CD4-positive, alpha-beta memory T cell (primary cell): ENCODE measurements at regions of chr10 and their contacts with region 1.

Region 1: GRCh38 chr10:101060036-101060950 is 1.5 kb upstream of the KAZALD1 start:
- DNase-seq: peak; percentile 80 to 98 (median 94)
- H3K4me3 ChIP-seq: peak overlapping the region; percentile 99 to 100
- H3K4me3 Mint-ChIP-seq: peak overlapping the region; percentile 92 to 98 (median 95)
- H3K27ac ChIP-seq: peak overlapping the region; percentile 92
- H3K27ac Mint-ChIP-seq: peak overlapping the region; percentile 88 to 99 (median 98)
- H3K4me1 ChIP-seq: peaks cover 28% of the 10 kb centered on the region
- H3K4me1 Mint-ChIP-seq: peaks cover 14 to 35% (median 22%) of the 10 kb centered on the region in 4 donors
- H3K27me3 ChIP-seq: peaks cover 23% of the 10 kb centered on the region
- H3K27me3 Mint-ChIP-seq: peaks cover 14 to 17% of the 10 kb centered on the region in 2 donors

Region 2: GRCh38 chr10:101012525-101013364 is 47.5 kb before region 1 on chr10:
- CTCF ChIA-PET with region 1: interaction called, 4 read pairs
- POLR2A ChIA-PET with region 1: no interaction called
- intact Hi-C with region 1: loop called (anchors 1 kb)
- DNase-seq: peak; percentile 51 to 72 (median 65)
- H3K4me3 ChIP-seq: no peak overlapping the region
- H3K4me3 Mint-ChIP-seq: no peak overlapping the region
- H3K27ac ChIP-seq: no peak overlapping the region
- H3K27ac Mint-ChIP-seq: peak overlapping the region in 3 of 7 donors; percentile 2 to 67 (median 61)
- H3K4me1 ChIP-seq: peaks cover 19% of the 10 kb centered on the region
- H3K4me1 Mint-ChIP-seq: peaks cover 10 to 15% (median 13%) of the 10 kb centered on the region in 4 donors
- H3K27me3 ChIP-seq: peaks cover 11% of the 10 kb centered on the region
- H3K27me3 Mint-ChIP-seq: peaks cover 20 to 23% of the 10 kb centered on the region in 2 donors

Region 3: DNA sequence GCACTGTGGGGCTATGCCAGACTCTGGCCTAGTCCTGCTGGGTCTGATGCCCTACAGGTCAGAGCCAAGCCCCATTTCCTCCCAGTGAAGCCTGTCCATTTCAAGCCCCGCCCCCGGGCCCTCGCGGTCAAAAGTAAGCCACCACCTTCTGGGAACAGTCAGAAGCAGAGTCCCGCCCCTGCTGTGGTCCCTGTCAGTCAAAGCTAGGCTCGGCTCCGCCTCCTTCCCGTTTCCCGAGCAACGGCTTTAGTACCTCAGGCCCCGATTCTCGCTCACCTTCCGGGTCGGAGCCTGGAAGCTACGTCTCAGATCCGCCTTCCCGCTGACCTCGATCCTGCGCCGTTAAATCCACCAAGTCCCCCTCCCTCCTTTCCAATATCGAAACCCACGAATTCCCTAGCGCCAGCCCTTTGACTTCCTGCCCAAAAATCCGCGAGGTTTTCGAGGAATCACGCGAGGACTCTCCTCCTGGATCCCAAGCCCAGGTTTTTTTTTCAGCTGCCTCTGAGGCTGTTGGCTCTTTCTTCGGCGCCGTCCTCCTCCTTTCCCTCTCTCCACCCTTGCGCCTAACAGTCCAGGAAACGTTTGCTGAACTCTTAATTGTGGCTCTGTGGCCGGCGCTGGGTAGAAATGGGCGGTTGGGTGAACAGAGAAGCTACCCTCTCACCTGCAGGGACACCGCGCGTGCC is 17.5 kb before region 1 on chr10:
- CTCF ChIA-PET with region 1: interaction called, 645 read pairs
- POLR2A ChIA-PET with region 1: interaction called, 33 read pairs
- intact Hi-C with region 1: loop called (anchors 1 kb)
- DNase-seq: peak; percentile 64 to 84 (median 68)
- H3K4me3 ChIP-seq: peak overlapping the region; percentile 81 to 94
- H3K4me3 Mint-ChIP-seq: peak overlapping the region; percentile 92 to 99 (median 97)
- H3K27ac ChIP-seq: peak overlapping the region; percentile 68
- H3K27ac Mint-ChIP-seq: peak overlapping the region; percentile 87 to 99 (median 97)
- H3K4me1 ChIP-seq: peaks cover 27% of the 10 kb centered on the region
- H3K4me1 Mint-ChIP-seq: peaks cover 16 to 25% (median 19%) of the 10 kb centered on the region in 4 donors
- H3K27me3 ChIP-seq: peaks cover under 1% of the 10 kb centered on the region
- H3K27me3 Mint-ChIP-seq: peaks cover 11 to 12% of the 10 kb centered on the region in 2 donors